Naive thymus-derived CD4-positive, alpha-beta T cell (primary cell): ENCODE measurements at regions of chrX and their contacts with region 1.

Region 1: GRCh38 chrX:30822068-30822681 is 66.9 kb downstream of the TAB3 start:
- DNase-seq: no peak
- ATAC-seq: peak; percentile 32
- H3K4me3 ChIP-seq: no peak overlapping the region
- H3K4me3 Mint-ChIP-seq: no peak overlapping the region
- H3K27ac ChIP-seq: no peak overlapping the region
- H3K27ac Mint-ChIP-seq: no peak overlapping the region
- H3K4me1 ChIP-seq: peaks cover 0 to 6% of the 10 kb centered on the region in 2 donors
- H3K4me1 Mint-ChIP-seq: peaks cover 5 to 28% (median 23%) of the 10 kb centered on the region in 7 donors
- H3K27me3 ChIP-seq: no peaks in the 10 kb centered on the region
- H3K27me3 Mint-ChIP-seq: no peaks in the 10 kb centered on the region

Region 2: GRCh38 chrX:30635630-30636029 is 186.5 kb before region 1 on chrX:
- CTCF ChIA-PET with region 1: no interaction called
- POLR2A ChIA-PET with region 1: no interaction called
- intact Hi-C with region 1: loop called in 1 of 2 experiments (anchors 5 kb)
- DNase-seq: peak in 1 of 9 donors; percentile 14
- ATAC-seq: peak; percentile 46
- H3K4me3 ChIP-seq: no peak overlapping the region
- H3K4me3 Mint-ChIP-seq: no peak overlapping the region
- H3K27ac ChIP-seq: no peak overlapping the region
- H3K27ac Mint-ChIP-seq: no peak overlapping the region
- H3K4me1 ChIP-seq: no peaks in the 10 kb centered on the region
- H3K4me1 Mint-ChIP-seq: no peaks in the 10 kb centered on the region
- H3K27me3 ChIP-seq: no peaks in the 10 kb centered on the region
- H3K27me3 Mint-ChIP-seq: no peaks in the 10 kb centered on the region